Cardiac septum (tissue), 1 donor: ENCODE measurements at regions of chr6 and their contacts with region 1.

Region 1: DNA sequence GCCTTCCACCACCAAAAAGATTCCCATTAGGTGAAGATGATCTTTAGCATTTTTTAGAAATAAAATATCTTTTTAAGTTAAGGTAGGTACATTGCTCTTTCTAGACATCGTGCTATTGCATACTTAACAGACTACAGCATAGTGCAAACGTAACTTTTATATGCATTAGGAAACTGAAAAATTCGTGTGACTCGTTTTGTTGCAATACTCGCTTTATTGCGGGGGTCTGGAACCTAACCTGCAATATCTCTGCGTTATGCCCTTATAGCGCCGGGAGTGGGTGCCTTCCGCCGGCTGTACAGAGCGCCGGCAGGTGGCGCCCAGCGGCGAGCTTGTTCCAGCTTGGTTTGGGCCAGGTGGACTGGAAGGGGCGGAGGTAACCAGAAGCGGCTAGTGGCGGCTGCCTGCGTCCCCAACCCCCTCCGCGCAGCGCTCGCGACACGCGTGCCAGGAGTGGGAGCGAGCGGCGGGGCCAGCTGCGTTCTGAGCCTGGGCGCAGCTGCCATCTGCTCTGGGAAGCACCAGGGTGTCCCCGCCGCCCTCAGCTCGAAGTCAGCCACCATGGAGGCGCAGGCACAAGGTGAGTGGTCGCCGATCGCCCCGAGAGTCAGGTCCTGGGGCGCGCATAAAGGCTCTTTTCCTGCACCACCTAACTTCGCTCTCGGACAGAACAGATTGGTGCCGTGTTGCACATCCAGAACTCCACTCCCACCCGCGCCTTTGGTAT is at the start of gene TPD52L1:
- DNase-seq: peak; percentile 93
- total RNA-seq, gene TPD52L1: 91.0 TPM

Region 2: DNA sequence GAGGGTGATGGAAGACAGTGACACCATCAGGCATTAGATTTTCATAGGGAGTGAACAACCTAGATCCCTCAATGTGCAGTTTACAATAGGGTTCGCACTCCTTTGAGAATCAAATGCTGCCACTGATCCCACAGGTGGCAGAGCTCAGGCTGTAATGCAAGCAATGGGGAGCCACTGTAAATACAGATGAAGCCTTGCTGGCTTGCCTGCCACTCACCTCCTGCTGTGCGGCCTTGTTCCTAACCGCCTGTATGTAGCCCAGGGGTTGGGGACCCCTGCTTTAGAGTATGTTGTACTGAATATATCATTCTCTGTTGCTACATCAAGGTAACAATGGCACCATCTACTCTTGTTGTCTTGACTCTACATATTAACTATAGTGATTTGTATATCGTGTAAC is 37.1 kb after region 1 on chr6:
- intact Hi-C with region 1: no loop called
- DNase-seq: no peak

Region 3: DNA sequence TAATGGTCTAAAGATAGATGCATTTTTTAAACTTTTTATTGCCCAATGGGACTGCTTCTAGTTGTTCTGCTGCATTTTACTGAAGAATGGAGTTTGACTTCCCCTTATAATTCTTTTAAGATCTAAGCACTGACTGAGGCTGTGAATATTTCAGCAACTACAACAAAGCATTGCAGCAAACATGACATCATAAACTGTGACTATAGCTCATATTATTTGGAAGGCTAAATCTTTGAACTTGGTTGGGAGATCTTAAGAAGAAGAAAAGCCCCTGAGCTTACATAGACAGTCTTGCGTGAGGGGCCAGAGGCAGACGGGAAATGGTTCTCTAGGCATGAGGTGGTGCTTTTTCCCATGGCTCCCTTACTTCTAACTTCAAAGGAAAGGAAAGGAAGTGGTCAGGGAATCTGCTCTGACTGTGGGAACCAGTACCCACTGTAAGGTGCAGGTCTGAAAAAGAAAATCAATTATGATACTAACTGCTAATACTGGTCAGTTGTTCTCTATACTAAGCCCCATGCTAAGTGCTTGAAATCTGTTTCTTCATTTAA is 610.6 kb after region 1 on chr6:
- intact Hi-C with region 1: loop called (anchors 5 kb)
- DNase-seq: no peak